ENCODE measurements at regions of chr19 and their contacts with region 1.

Region 1: GRCh38 chr19:44968118-44968517 is 12.9 kb downstream of the CLPTM1 start:
- DNase-seq: no peak

Region 2: DNA sequence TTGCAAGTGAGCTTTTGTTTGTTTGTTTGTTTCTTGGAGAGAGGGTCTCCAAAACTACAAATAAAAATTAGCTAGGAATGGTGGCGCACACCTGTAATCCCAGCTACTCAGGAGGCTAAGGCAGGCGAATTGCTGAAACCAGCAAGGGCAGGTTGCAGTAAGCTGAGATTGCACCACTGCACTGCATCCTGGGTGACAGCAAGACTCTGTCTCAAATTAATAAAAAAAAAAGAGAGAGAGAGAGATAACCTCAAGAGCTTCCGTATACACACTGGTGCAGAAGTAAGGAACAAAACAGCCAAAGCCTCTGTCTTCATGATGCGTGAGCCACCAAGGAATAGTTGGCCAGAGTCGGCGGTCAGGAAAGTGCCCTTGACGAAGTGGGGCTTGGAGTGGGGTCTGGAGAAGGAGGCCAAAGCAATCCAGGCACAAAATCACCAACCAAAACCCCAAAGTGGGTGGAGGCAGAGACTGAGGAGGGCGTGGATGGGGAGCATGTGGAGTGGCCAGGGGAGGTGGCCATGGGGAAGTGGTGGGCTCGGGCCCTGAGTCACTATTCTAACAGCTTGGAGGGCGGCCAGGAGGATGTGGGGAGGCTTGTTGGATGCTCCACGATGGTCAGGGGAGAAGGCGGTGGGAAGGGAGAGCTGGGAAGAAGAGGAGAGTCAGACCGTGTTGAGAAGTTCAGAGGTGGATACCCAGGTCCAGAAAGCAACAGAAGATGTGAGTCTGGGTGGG is 98.2 kb before region 1 on chr19:
- intact Hi-C with region 1: no loop called
- DNase-seq: peak; percentile 89

Region 3: DNA sequence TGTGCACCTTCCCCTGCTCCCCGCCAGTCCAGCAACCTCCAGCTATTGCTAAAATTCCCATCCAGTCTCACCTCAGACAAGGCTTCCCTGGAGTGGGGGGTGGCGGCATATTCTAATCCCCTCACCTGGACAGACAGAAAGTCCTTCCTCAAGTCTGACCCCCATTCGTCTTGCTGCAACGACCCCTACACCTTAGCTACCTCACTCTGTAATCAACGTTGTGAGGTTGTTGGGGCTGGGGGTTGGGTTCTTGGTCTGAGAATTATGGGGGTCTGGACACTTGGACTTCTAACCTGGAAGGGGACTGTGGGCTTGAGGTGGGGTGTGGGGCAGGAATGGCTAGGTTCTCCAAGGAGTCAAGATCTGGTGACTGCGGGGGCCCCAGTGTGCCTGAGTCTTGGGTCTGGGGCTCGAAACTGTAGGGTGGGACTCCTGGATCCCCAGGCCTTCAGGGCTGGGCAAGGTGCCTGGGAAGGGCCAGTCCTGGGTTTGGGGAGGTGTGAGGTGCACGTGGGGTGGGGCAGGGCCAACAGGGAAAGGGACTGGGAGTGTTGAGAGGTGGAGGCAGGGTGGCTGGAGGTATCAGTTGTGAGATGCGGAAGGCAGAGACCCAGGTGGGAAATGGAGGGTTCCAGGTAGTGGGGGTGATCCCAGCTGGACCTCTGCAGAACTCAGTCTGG is 897.3 kb after region 1 on chr19:
- intact Hi-C with region 1: loop called in 1 of 2 experiments (anchors 5 kb)
- DNase-seq: no peak